Right ventricle myocardium inferior (tissue), 1 donor: ENCODE measurements at regions of chr15 and their contacts with region 1.

Region 1: GRCh38 chr15:60751985-60752952 is 273.3 kb upstream of the ICE2 start:
- DNase-seq: peak; percentile 73
- ATAC-seq: peak; percentile 90

Region 2: DNA sequence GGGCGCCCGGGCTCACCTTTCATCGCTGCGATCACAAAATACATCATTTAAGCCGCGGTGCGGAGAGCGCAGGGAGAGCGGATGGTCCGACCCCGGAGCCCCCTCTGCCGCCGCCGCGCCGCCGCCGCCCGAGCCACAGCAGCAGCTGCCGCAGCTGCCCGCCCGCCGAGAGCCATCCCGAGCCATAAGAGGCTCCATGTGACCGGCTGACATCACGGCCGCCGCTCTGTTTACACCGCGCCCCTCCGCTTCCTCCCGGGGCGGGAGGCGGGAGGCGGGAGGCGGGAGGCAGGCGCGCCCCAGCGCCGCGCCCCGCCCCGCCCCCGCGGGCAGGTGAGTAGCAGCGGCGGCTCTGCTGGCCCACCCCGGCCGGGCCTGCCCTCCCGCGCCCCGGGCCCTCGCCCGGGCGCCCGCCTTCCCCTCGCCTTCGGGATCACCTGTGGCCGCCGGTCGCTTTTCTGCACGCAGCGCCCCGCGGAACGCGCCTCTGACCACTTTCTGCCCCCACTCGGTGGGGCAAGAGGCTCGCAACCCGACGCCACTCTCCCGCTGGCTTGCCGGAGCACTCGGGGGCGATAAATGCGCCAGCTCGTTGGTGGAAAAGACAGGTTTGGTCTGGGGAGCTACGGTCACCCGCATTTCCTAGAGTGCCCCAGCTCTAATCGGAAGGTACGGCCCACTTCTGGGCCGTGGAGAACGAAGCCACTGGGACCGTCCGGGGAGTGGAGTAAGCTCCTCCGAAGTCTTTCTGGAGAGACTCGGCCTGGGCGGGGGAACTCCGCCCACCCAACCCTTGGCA is 159.7 kb before region 1 on chr15:
- intact Hi-C with region 1: loop called (anchors 5 kb)
- DNase-seq: peak; percentile 91
- ATAC-seq: peak; percentile 94

Region 3: DNA sequence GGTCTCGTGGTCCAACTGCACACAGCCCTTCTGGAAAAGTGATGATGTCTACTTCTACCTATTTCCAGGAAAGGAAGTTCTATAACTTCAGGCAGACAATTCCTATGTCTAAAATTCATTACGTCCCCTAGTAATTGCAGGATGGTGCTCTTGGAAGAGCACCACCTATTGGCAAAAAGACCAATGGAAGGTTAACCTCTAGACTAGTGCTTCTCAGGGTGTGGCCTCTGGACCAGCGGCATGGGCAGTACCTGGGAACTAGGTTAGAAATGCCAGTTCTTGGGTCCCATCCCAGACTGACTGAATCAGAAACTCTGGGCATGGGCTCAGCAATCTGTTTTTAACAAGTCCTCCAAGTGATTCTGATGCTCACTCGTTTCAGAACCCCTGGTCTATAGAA is 15.1 kb before region 1 on chr15:
- intact Hi-C with region 1: no loop called
- DNase-seq: no peak
- ATAC-seq: no peak